GM12878 (cell line): ENCODE measurements at regions of chr2 and their contacts with region 1.

Region 1: GRCh38 chr2:30239308-30239985 is 8.1 kb downstream of the LBH start:
- DNase-seq: no peak
- ATAC-seq: peak; percentile 64
- H3K4me3 ChIP-seq: no peak overlapping the region
- H3K27ac ChIP-seq: no peak overlapping the region
- H3K4me1 ChIP-seq: peaks cover 18% of the 10 kb centered on the region
- H3K27me3 ChIP-seq: no peaks in the 10 kb centered on the region
- CTCF ChIP-seq: peak; percentile 61 to 94 (median 88)
- EP300 ChIP-seq: no peak
- POLR2A ChIP-seq: no peak
- RAD21 ChIP-seq: peak; percentile 69

Region 2: DNA sequence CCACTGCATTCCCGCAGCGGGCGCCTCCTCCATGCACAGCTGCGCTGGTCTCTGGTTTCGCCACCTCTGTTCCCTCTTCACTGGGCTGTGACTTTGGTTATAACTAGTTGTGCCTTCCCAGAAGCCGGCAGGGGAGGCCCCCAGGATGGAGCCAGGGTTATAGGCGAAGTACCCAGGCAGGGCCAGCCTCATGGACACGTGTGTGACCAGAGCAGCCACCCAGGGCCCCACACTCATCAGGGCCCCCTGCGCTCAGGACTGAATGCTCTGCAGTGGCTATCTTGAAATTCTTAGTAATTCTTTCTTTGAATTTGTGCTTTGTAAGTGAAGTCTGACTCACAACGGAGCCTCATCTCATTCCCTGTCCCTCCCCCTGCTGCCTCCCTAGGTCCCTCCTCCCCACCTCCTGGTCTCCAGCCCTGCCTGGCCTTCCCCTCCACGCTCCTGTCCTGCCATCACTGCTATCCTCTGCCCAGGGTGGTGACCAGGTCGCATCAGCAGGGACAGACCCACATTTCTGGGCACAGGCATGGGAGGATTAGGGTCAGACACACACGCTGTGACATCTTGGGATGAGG is 46.3 kb before region 1 on chr2:
- CTCF ChIA-PET with region 1: no interaction called
- POLR2A ChIA-PET with region 1: no interaction called
- RAD21 ChIA-PET with region 1: no interaction called
- SMC1A ChIA-PET with region 1: no interaction called
- in situ Hi-C with region 1: no loop called
- intact Hi-C with region 1: no loop called
- DNase-seq: no peak
- ATAC-seq: no peak
- H3K4me3 ChIP-seq: no peak overlapping the region
- H3K27ac ChIP-seq: no peak overlapping the region
- H3K4me1 ChIP-seq: no peaks in the 10 kb centered on the region
- H3K27me3 ChIP-seq: no peaks in the 10 kb centered on the region
- CTCF ChIP-seq: no peak
- EP300 ChIP-seq: no peak
- POLR2A ChIP-seq: no peak
- RAD21 ChIP-seq: no peak

Region 3: GRCh38 chr2:30252723-30253701 is 13.6 kb after region 1 on chr2:
- CTCF ChIA-PET with region 1: interaction called, 14 read pairs
- POLR2A ChIA-PET with region 1: interaction called, 8 read pairs
- RAD21 ChIA-PET with region 1: interaction called, 7 read pairs
- SMC1A ChIA-PET with region 1: interaction called, 15 read pairs
- in situ Hi-C with region 1: no loop called
- intact Hi-C with region 1: no loop called
- DNase-seq: no peak
- ATAC-seq: peak; percentile 64
- H3K4me3 ChIP-seq: no peak overlapping the region
- H3K27ac ChIP-seq: no peak overlapping the region
- H3K4me1 ChIP-seq: no peaks in the 10 kb centered on the region; the same call in 1 of the 2 replicates
- H3K27me3 ChIP-seq: no peaks in the 10 kb centered on the region
- CTCF ChIP-seq: no peak
- EP300 ChIP-seq: no peak
- POLR2A ChIP-seq: no peak
- RAD21 ChIP-seq: no peak